ENCODE measurements at regions of chr6 and their contacts with region 1.

Region 1: GRCh38 chr6:154995284-154996015 is at the start of gene TIAM2:
- DNase-seq: peak; percentile 11
- H3K4me3 Mint-ChIP-seq: peak within 1 kb of the TSS; percentile 71
- H3K27ac Mint-ChIP-seq: peak within 1 kb of the TSS; percentile 44
- H3K4me1 Mint-ChIP-seq: peaks cover 18% of the 10 kb centered on the region
- H3K27me3 Mint-ChIP-seq: peaks cover 16% of the 10 kb centered on the region
- total RNA-seq, gene TIAM2: 90.4 and 95.6 TPM in 2 replicates

Region 2: GRCh38 chr6:154962753-154963152 is 32.7 kb before region 1 on chr6:
- intact Hi-C with region 1: no loop called
- DNase-seq: no peak
- H3K4me3 Mint-ChIP-seq: no peak overlapping the region
- H3K27ac Mint-ChIP-seq: no peak overlapping the region
- H3K4me1 Mint-ChIP-seq: peaks cover 11% of the 10 kb centered on the region
- H3K27me3 Mint-ChIP-seq: peaks cover 1% of the 10 kb centered on the region

Region 3: DNA sequence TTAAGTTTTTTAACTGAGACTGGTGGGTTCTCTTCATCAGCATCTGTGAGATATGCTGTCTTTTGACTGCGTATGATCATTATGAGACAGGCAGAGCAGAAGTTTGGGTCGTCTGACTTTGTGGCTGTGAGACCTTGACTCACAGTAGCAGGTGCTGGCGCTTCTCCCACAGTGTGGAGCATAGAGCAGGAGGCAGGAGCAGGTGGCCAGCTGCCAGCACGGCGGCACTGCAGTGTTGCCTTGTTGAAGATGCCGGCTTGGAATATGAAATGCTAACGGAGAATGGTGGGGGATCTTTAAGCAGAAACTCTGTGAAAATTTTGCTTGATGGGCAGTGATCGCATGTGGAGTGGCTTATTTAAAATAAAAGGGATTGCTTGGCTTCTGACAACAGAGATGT is 104.6 kb after region 1 on chr6:
- intact Hi-C with region 1: loop called (anchors 1 kb)
- DNase-seq: no peak
- H3K4me3 Mint-ChIP-seq: no peak overlapping the region
- H3K27ac Mint-ChIP-seq: no peak overlapping the region
- H3K4me1 Mint-ChIP-seq: peaks cover 32% of the 10 kb centered on the region
- H3K27me3 Mint-ChIP-seq: no peaks in the 10 kb centered on the region

Region 4: DNA sequence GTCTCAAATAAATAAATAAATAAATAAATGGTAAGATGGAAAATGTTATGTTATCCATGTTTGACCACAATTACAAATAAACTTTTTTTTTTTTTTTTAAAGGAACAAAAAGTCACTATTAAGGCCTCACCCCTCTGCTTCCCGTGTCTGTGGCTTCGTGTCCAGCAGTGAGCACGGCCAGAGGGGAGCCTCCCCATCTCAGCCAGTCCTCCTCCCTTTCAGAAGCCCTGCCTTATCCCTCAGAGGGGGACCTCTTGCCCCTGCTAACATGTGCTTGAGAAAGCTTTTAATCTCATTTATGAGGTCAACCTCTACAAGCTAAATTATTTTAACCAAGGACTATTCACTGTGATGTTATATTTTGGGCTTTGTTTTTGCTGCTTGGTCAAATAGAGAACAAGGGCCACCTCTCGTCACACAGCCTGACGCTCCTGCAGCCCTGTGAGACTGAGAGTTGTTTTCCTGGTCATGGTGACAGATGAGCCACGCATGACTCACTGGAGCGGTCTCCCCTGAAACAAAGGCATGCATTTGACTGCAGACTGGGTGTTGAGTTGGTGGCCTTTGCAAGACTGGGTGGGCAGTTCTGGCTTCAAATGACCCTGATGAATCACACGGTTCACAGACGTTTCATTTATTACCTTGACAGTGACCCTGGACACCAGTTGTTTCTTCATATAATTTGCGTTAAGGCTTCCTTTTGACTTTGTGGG is 131.4 kb after region 1 on chr6:
- intact Hi-C with region 1: loop called (anchors 5 kb)
- DNase-seq: no peak
- H3K4me3 Mint-ChIP-seq: peak overlapping the region; percentile 60
- H3K27ac Mint-ChIP-seq: peak overlapping the region; percentile 92
- H3K4me1 Mint-ChIP-seq: peaks cover 51% of the 10 kb centered on the region
- H3K27me3 Mint-ChIP-seq: no peaks in the 10 kb centered on the region

Region 5: GRCh38 chr6:155154158-155154830 is 158.8 kb after region 1 on chr6:
- intact Hi-C with region 1: loop called (anchors 2 kb)
- DNase-seq: peak; percentile 48
- H3K4me3 Mint-ChIP-seq: peak overlapping the region; percentile 78
- H3K27ac Mint-ChIP-seq: peak overlapping the region; percentile 97
- H3K4me1 Mint-ChIP-seq: peaks cover 90% of the 10 kb centered on the region
- H3K27me3 Mint-ChIP-seq: peaks cover 2% of the 10 kb centered on the region

Measured in activated T-helper 1 cell treated with anti-CD3 and anti-CD28 coated beads, Interleukin-12 subunit alpha, Interleukin-12 subunit beta, Interleukin-2, Interleukin-4 antibody, amounts not matched to agents 30 ng/mL and 10 ng/mL and 1 ng/mL, durations not matched to agents 14 hours and 24 hours and 36 hours (primary cell).